Heart left ventricle (tissue), 16 donors: ENCODE measurements at regions of chr11 and their contacts with region 1.

Region 1: DNA sequence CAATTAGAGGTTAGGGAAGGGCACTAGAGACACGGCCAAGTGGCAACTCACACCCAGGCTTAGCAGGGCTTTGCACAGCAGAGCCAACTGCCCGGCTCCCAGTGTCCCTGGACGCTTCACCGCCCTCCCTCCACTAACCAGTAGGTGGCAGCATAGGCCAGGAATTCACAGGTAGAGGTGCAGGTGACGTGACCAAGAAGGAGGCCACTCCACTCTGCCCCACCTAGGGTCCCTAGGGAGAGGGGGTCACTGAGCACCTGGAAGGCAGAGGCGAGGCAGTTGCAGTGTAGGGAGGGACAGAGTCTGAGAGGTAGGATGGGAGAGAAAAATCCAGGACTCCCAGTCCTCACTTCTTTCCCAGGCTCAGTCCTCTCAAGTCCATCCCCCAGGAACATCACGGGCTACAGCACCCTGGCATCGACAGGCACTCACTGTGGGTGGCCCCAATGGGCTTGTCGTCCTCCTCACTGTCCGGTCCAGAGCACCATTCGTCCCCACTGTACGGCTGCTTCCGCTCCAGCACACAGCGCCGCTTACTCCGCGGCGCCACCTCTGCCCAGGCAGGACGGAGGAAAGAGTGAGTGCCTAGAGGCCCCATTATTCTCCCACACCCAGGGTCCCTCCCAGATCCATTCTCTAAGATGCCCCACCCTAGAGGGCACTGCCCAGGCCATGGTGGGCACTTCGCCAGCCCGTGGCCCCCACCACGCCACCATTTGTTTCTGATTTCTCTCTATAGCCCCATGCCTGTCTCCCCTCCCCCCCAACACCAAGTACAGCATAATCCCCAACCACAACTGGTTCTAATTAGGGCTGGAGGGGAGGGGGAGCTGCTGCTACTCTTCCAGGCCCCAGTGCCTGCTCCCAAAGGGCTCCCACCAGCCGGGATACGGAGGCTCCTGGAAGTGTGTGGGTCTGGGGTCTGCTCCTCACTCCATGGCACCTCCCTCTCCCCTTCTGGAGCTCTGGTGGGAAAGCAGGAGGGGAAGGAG is 18.4 kb downstream of the BCL9L start:
- DNase-seq: peak; percentile 83 to 89 (median 83)
- ATAC-seq: peak; percentile 44 to 71 (median 69)
- H3K4me3 ChIP-seq: no peak overlapping the region
- H3K27ac ChIP-seq: peak overlapping the region in 11 of 12 donors; percentile 13 to 99 (median 90)
- H3K4me1 ChIP-seq: peaks cover 9 to 61% (median 56%) of the 10 kb centered on the region in 12 donors
- H3K27me3 ChIP-seq: no peaks in the 10 kb centered on the region
- CTCF ChIP-seq: peak; percentile 88 to 96 (median 93)
- POLR2A ChIP-seq: no peak

Region 2: DNA sequence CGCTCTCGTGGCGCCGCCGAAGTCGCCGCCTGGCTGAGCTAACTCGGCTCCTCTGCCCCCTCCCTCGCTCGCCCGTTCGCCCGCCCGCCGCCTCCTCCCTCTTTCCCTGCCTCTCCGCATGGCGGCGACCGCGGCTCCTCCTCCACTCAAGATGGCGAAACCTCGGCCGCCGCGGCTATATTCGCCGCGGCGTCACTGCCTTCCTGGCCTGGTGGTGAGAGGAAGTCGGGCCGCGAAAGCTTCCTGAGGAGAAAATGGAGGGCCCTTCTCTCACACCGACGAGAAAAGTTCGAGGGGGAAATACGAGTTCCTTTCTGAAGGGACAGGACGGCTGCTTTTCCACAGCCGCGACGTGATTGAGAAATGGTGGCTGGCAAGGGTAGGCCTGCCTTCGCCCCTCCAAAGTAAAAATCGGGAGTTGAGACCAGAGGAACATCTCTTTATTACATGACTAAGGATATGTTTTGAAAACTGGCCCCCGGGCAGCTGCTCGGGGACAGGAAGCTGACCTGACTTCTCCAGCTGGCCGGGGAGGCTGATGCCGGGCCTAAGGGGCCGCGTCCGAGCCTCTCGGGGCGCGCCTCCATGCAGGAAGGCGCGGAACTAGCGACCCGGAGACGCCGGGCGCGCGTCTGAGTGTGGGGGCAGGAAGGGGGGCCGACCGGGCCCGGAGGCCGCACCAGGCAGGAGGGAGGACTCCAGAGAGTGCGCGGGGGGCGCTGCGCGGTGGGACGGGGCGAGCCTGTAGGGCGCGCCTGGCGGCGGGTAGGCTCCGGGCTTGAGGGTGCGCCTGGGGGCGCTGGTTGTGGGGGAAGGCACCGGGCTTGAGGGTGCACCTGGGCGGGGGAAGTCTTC is 116.0 kb before region 1 on chr11 and contains the start of gene DDX6:
- intact Hi-C with region 1: loop called in 2 of 10 experiments (anchors 1 to 5 kb)
- DNase-seq: peak; percentile 92 to 97 (median 94)
- ATAC-seq: peak; percentile 70 to 89 (median 85)
- H3K4me3 ChIP-seq: peak within 1 kb of the TSS; percentile 66 to 98 (median 78)
- H3K27ac ChIP-seq: peak within 1 kb of the TSS; percentile 92 to 100 (median 99)
- H3K4me1 ChIP-seq: peaks cover 0 to 48% (median 36%) of the 10 kb centered on the region in 12 donors
- H3K27me3 ChIP-seq: no peaks in the 10 kb centered on the region
- CTCF ChIP-seq: peak in 10 of 12 donors; percentile 10 to 54 (median 38)
- POLR2A ChIP-seq: peak; percentile 39 to 87
- total RNA-seq, gene DDX6: 83.7 to 166 (median 114) TPM

Region 3: DNA sequence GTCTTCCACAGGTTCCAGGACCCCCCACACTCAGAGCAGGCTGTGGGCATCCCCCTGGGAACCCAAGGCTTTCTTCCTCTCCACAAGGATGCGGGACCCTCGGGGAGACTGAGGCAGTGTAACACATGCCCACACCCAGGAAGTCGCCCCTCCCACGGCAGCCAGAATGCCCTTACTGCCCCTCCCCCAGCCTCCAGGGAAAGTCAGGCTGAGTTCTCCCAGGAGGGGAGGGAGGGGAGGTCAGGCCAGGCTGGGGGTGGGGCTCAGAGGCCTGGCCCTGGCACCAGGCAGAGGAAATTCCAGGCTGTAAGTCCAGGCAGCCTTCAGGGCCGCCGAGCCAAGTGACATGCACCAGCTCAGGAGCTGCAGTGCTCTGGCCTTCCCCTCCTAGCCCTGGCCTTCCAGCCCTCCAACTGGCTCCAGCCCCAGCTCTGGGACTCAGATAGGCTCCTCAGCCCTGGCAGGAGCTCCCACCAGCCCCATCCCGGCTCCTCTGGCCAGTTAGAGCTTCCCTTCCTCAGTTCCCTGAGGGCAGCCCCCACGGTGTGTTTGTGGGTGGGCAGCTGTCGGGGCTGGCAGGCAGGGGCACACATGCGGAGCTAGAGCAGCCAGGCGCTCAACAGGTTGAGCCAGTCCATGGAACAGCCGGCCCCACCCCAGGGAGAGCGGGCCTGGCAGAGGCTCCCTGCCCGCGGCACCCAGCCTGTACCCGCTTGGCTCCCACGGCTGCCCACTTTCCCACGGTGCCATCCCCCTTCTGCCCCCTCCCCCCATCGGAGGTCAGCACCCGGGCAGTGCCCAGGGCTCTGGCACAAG is 14.8 kb after region 1 on chr11:
- intact Hi-C with region 1: loop called in 2 of 10 experiments (anchors 1 kb)
- DNase-seq: peak; percentile 82 to 95 (median 91)
- ATAC-seq: peak; percentile 60 to 74 (median 69)
- H3K4me3 ChIP-seq: peak overlapping the region; percentile 79 to 99 (median 92)
- H3K27ac ChIP-seq: peak overlapping the region; percentile 87 to 100 (median 94)
- H3K4me1 ChIP-seq: peaks cover 4 to 80% (median 71%) of the 10 kb centered on the region in 12 donors
- H3K27me3 ChIP-seq: no peaks in the 10 kb centered on the region
- CTCF ChIP-seq: no peak
- POLR2A ChIP-seq: peak in 1 of 2 donors; percentile 70

Region 4: GRCh38 chr11:118928108-118928870 is 20.9 kb after region 1 on chr11:
- intact Hi-C with region 1: loop called (anchors 1 to 2 kb)
- DNase-seq: peak; percentile 91 to 93 (median 92)
- ATAC-seq: peak; percentile 73 to 80 (median 75)
- H3K4me3 ChIP-seq: peak overlapping the region; percentile 45 to 95 (median 80)
- H3K27ac ChIP-seq: peak overlapping the region; percentile 92 to 100 (median 98)
- H3K4me1 ChIP-seq: peaks cover 3 to 50% (median 32%) of the 10 kb centered on the region in 12 donors
- H3K27me3 ChIP-seq: no peaks in the 10 kb centered on the region
- CTCF ChIP-seq: peak; percentile 84 to 97 (median 94)
- POLR2A ChIP-seq: no peak

Region 5: DNA sequence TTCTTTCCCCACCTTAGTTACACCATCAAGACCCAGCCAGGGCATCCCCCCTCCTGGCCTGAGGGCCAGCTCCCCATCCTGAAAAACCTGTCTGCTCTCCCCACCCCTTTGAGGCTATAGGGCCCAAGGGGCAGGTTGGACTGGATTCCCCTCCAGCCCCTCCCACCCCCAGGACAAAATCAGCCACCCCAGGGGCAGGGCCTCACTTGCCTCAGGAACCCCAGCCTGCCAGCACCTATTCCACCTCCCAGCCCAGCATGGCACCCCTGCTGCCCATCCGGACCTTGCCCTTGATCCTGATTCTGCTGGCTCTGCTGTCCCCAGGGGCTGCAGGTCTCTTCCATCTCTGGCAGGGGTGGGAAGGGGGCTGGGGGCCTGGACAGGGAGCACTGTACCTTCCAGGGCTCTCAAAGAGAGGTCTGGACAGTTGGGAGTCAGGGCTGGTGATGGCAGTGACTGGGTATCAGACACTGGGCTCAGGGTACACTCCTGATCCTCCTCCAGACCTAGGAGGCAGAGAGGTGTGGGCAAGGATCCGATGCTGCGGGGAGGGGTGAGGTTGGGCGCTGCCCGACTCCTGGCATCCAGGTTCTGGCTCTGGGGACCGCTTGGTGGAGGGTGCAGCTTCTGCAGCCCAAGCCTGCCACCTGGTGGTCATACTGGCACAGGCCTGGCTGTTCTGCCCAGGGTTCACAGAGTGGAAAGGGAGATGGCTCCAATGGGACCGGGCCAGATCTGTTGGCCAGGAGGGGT is 48.9 kb after region 1 on chr11 and contains the start of gene UPK2:
- intact Hi-C with region 1: loop called (anchors 1 to 10 kb)
- DNase-seq: peak; percentile 84 to 94 (median 88)
- ATAC-seq: peak; percentile 93 to 98 (median 96)
- H3K4me3 ChIP-seq: no peak within 1 kb of the TSS
- H3K27ac ChIP-seq: no peak within 1 kb of the TSS
- H3K4me1 ChIP-seq: peaks cover 0 to 7% (median 0%) of the 10 kb centered on the region in 12 donors
- H3K27me3 ChIP-seq: peaks cover 0 to 9% (median 0%) of the 10 kb centered on the region in 9 donors
- CTCF ChIP-seq: peak; percentile 92 to 95 (median 93)
- POLR2A ChIP-seq: no peak
- total RNA-seq, gene UPK2: not detected

Region 6: DNA sequence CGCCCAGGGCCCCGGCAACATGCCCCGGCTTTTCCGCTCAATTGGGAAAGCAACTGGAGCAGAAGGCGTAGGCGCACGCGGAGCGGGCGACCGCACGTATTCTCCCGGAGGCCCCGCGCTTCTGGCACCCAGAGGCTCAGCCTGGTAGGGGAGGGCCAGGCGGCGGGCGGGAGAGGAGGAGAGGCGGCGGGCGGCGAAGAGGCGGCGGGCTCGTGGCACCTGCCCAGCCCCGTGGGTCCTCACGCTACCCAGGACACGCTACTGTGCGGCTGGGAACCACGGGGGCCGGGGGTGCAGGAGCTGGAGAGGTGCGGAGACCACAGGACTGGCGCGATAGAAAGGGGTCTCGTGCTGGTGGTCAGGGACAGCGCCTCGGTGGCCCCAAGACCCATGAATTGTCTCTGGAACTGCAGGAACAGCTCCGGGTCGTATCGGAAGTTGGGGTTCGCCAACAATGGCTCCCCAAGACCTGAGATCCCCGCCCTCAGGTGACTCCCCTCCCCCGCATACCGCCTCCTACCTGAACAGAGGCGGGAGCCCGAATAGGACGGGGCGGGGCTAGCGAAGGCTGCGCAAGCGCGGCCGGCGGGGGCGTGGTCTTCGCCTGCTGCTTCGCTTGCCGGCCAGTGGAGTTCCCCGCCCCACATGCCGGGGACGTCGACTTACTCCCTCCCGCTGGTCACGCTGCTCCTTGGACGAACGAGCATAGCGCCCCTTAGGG is 123.1 kb after region 1 on chr11 and contains the start of gene SLC37A4:
- intact Hi-C with region 1: loop called in 1 of 10 experiments (anchors 5 kb)
- DNase-seq: peak; percentile 96 to 99 (median 98)
- ATAC-seq: peak; percentile 96 to 99 (median 97)
- H3K4me3 ChIP-seq: peak within 1 kb of the TSS; percentile 64 to 95 (median 82)
- H3K27ac ChIP-seq: peak within 1 kb of the TSS; percentile 6 to 85 (median 67)
- H3K4me1 ChIP-seq: peaks cover 0 to 25% (median 12%) of the 10 kb centered on the region in 12 donors
- H3K27me3 ChIP-seq: no peaks in the 10 kb centered on the region
- CTCF ChIP-seq: peak in 7 of 12 donors; percentile 72 to 97 (median 86)
- POLR2A ChIP-seq: peak in 1 of 2 donors; percentile 53
- total RNA-seq, gene SLC37A4: 4.5 to 18.5 (median 7.7) TPM

Region 7: GRCh38 chr11:119101759-119102423 is 194.5 kb after region 1 on chr11 and contains the start of gene DPAGT1:
- intact Hi-C with region 1: loop called in 1 of 10 experiments (anchors 5 kb)
- DNase-seq: peak; percentile 89 to 94 (median 92)
- ATAC-seq: peak; percentile 93 to 97 (median 96)
- H3K4me3 ChIP-seq: peak within 1 kb of the TSS; percentile 56 to 94 (median 84)
- H3K27ac ChIP-seq: peak within 1 kb of the TSS; percentile 78 to 97 (median 92)
- H3K4me1 ChIP-seq: peaks cover 8 to 43% (median 34%) of the 10 kb centered on the region in 12 donors
- H3K27me3 ChIP-seq: no peaks in the 10 kb centered on the region
- CTCF ChIP-seq: no peak
- POLR2A ChIP-seq: no peak
- total RNA-seq, gene DPAGT1: 11.2 to 32.4 (median 16.5) TPM